Left colon (tissue), 2 donors: ENCODE measurements at regions of chrX and their contacts with region 1.

Region 1: GRCh38 chrX:19403696-19404095 is 60.0 kb downstream of the PDHA1 start:
- DNase-seq: no peak
- ATAC-seq: no peak

Region 2: DNA sequence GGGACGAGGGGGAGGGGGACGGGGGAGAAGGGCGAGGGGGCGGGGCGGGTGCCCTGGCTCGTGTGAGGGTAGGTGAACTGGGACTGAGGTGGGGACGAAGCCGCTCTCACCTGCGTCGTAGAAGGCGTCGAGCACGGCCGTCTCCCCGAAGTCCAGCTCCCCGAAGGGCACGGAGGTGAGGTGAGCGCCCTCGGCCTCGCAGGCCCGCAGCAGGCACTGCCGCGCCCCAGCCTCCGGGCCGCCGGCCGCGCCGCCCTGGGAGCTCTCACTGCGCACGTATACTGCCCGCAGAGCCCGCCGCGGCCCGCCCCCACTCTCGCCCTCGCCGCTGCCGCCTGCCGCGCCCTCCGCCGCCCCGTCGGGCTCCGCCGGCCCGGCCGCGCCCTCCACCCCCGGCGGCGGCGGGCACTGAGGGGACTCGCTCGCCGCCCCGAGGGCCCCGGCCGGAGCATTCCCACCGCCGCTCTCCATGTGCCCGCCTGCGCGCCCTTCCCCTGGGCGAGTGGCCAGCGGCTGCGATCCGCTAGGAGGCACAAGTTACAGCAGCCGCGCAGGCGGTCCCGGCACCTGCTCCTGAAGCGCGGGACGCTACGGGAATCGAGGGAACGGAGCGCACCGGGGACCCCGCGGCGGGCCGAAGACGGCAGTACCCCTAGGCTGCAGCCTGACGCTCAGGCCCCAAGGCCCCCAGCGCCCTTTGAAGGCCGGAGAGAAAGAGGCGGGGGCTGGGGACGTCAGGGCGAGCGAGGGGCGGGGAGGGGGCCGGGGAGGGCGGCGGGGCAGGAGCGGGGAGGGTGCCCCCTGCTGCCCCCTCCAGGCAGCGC is 111.3 kb after region 1 on chrX and contains the start of gene MAP3K15:
- intact Hi-C with region 1: loop called in 1 of 2 experiments (anchors 10 kb)
- DNase-seq: peak; percentile 28 to 35
- ATAC-seq: peak; percentile 71
- total RNA-seq, gene MAP3K15: 0.12 to 0.17 TPM